Right cardiac atrium (tissue), 5 donors: ENCODE measurements at regions of chr5 and their contacts with region 1.

Region 1: DNA sequence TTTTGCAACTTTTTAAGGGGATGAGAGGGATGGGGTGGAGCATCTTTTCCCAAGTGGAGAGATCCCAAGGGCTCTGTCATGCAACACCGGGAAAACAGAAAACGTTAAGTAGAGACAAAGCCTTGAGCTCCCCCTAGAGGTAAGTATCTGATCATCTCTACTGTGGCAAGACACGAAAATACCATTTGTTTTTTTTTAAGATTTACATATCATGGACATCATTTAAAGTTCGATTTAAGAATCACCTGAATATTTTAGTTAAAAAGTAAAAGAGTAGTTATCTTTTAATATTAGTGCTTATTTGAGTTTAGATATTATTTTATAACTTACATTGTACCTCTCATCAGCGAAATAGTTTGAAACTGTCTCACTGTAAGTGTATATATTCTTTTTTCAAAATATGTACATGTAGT is 200.4 kb downstream of the LRRC70 start:
- DNase-seq: no peak
- ATAC-seq: peak; percentile 89 to 91
- H3K4me3 ChIP-seq: no peak overlapping the region
- H3K27ac ChIP-seq: no peak overlapping the region
- H3K4me1 ChIP-seq: no peaks in the 10 kb centered on the region
- H3K27me3 ChIP-seq: no peaks in the 10 kb centered on the region

Region 2: DNA sequence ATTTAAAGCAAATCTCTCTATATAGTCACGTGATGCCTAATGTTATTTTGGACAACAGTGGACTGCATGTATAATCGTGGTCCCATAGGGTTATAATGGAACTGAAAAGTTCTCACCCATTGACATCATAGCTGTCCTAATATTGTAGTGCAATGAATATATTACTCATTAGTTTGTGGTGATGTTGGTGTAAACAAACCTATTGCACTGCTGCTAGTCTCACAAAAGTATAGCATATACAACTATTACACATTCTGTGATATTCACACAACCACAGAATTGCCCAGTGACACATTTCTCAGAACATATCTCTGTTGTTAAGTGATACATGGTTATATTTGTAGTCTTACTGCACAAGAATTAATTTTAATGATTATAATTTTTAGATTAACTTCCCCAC is 328.8 kb before region 1 on chr5:
- intact Hi-C with region 1: no loop called
- DNase-seq: no peak
- ATAC-seq: no peak
- H3K4me3 ChIP-seq: no peak overlapping the region
- H3K27ac ChIP-seq: no peak overlapping the region
- H3K4me1 ChIP-seq: no peaks in the 10 kb centered on the region
- H3K27me3 ChIP-seq: no peaks in the 10 kb centered on the region

Region 3: DNA sequence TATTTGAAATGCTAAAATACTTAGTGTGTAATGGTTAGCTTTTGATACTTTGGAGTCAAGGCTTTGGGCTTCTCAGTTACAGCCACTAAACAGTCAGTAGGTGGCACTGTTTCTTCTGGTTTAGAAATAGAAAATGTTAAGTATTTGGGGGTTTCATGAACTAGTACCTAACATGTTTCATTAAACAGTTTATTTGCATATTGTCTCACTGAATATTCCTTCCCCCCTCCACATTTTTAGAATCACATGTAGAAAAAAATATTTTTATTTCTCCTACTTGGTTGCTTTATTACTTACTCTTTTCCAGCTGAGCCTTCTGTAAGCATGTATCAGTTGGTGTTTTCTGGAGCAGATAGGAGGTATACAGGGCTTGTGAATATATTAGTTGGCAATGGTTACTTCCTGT is 318.4 kb before region 1 on chr5:
- intact Hi-C with region 1: loop called (anchors 5 kb)
- DNase-seq: no peak
- ATAC-seq: peak; percentile 62 to 72
- H3K4me3 ChIP-seq: no peak overlapping the region
- H3K27ac ChIP-seq: no peak overlapping the region
- H3K4me1 ChIP-seq: no peaks in the 10 kb centered on the region
- H3K27me3 ChIP-seq: no peaks in the 10 kb centered on the region